ENCODE measurements at regions of chr19 and their contacts with region 1.

Region 1: DNA sequence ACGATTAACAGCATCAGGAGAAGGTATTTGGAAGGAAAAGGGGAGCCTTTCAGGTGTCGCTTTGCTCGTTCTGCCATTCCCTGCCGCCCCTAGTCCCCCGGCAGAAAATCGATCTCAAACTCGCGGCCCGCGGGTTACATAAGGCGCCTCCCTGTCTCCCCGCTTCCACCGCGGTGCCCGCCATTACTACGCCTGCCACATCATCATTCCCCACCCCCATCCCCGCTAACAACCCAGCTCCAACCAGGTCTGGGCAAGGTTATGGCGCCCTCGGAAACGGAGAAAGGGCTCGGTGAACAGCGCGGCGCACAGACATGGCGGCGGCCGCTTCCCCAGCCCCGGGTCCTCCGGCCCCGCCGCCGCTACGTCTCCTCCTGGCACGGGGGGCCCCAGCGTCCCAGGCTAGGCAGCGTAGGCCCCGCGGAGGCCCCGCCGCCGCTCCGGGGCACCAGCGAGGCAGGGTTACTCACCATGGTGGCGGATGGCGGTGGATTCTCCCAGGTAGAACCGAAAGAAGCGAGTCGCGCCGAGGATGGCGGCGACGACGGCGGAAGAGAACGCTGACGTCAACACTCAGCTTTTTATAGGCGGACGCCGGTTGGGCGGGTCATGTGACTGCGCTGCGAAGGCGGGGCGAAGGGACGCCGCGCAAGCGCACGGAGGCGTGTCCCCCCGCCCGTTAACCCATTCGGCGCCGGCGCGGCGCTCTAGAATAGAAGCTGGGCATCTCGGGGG is at the start of gene EEF2:
- DNase-seq: peak; percentile 87
- H3K4me3 Mint-ChIP-seq: peak within 1 kb of the TSS; percentile 93
- H3K27ac Mint-ChIP-seq: peak within 1 kb of the TSS; percentile 91
- H3K4me1 Mint-ChIP-seq: peaks cover 43% of the 10 kb centered on the region
- H3K27me3 Mint-ChIP-seq: peaks cover 2% of the 10 kb centered on the region
- total RNA-seq, gene EEF2: 2,359 TPM in 2 replicates

Region 2: DNA sequence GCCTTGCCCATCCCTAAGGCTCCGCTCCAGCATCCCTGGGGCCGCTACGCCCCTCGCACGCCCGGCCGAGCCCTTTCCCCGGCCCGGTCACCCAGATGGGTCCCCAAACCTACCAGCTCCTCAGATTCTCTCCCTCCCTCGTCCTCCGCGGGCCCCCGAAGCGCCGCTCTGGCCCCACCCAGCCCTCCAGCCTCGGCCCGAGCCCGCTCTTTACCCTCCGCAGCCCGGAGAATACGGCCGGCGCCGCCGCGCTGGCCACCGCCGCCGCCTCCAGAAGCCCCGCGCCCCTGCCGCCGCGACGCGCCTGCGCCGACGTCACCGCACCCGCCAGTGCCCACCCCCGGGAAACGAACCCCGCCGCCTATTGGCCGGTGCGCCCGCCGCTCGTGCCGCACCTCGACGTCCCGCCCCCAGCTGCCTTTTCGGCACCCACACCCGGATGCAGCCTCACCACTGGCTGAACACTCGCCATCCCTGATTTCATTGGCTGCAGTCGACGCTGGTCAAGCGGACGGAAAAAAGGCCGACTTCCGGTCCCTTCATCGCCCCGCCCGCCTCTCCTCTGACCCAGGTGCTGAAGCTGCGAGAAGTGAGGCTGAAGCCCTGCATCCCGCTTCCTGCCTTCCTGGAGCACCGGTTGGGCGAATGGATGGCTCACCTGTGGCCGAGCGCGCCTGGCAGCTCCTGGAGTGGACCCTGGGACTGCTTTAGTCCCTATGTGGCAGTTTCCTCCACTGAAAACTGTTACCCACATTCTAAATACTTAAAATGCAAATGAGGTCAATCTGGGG is 14.1 kb before region 1 on chr19 and contains the start of gene DAPK3:
- intact Hi-C with region 1: loop called (anchors 1 kb)
- DNase-seq: peak; percentile 93
- H3K4me3 Mint-ChIP-seq: peak within 1 kb of the TSS; percentile 91
- H3K27ac Mint-ChIP-seq: peak within 1 kb of the TSS; percentile 82
- H3K4me1 Mint-ChIP-seq: peaks cover 25% of the 10 kb centered on the region
- H3K27me3 Mint-ChIP-seq: no peaks in the 10 kb centered on the region
- total RNA-seq, gene DAPK3: 47.2 and 47.3 TPM in 2 replicates

Region 3: GRCh38 chr19:4065430-4066175 is 80.5 kb after region 1 on chr19:
- intact Hi-C with region 1: loop called (anchors 1 kb)
- DNase-seq: peak; percentile 97
- H3K4me3 Mint-ChIP-seq: peak overlapping the region; percentile 64
- H3K27ac Mint-ChIP-seq: no peak overlapping the region
- H3K4me1 Mint-ChIP-seq: peaks cover 16% of the 10 kb centered on the region
- H3K27me3 Mint-ChIP-seq: no peaks in the 10 kb centered on the region

Region 4: GRCh38 chr19:4139614-4140236 is 154.7 kb after region 1 on chr19:
- intact Hi-C with region 1: loop called (anchors 1 kb)
- DNase-seq: peak; percentile 78
- H3K4me3 Mint-ChIP-seq: no peak overlapping the region
- H3K27ac Mint-ChIP-seq: no peak overlapping the region
- H3K4me1 Mint-ChIP-seq: peaks cover 11% of the 10 kb centered on the region
- H3K27me3 Mint-ChIP-seq: peaks cover 7% of the 10 kb centered on the region

Region 5: GRCh38 chr19:4208385-4209094 is 223.5 kb after region 1 on chr19:
- intact Hi-C with region 1: loop called (anchors 1 kb)
- DNase-seq: no peak
- H3K4me3 Mint-ChIP-seq: no peak overlapping the region
- H3K27ac Mint-ChIP-seq: no peak overlapping the region
- H3K4me1 Mint-ChIP-seq: no peaks in the 10 kb centered on the region
- H3K27me3 Mint-ChIP-seq: peaks cover 6% of the 10 kb centered on the region